ENCODE measurements at regions of chrX and their contacts with region 1.

Region 1: DNA sequence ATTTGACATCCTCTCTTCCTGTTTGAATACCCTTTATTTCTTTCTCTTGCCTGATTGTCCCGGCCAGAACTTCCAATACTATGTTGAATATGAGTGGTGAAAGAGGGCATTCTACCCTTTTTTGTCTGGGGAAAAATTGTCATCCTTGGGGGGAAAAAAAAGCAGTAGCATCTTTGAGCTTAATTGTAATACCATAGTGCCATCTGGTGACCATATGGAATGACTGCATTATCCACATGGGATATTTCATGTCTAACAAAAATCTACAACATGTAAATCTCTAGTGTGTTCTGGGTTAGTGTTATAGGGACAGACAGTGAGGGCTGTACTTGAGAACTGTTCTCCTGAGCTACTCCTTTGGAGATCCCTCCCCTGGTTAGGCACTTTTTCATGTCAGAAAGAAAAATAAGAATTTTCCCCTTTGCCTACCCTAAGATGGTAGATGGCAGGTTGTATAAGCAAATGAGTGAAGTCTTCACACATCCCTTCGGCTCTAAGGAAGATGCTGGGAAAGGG is 26.0 kb downstream of the CAPN6 start:
- DNase-seq: peak; percentile 31
- H3K4me3 Mint-ChIP-seq: no peak overlapping the region
- H3K27ac Mint-ChIP-seq: no peak overlapping the region
- H3K4me1 Mint-ChIP-seq: no peaks in the 10 kb centered on the region
- H3K27me3 Mint-ChIP-seq: peaks cover 100% of the 10 kb centered on the region
- CTCF ChIP-seq: peak; percentile 66

Region 2: DNA sequence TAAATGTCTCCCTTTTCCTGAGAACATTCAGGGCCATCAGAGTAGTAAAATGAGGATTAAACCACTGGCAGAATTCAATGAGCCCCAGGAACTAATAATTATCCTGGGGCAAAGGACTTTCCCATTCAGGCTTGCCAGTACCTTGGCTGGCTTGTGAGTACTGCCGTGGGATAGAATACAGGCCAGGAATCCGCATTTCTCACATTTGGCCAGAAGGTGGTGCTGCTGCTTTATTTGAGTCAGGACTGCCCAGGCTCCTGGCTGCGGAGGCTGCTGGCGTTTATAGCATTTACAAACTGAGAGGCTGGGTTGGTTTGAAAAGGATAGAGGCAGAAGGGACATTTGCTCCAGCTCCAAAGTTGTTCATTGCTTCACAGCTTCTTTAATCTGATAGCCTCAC is 794.2 kb before region 1 on chrX:
- CTCF ChIA-PET with region 1: interaction called, 4 read pairs
- POLR2A ChIA-PET with region 1: no interaction called
- intact Hi-C with region 1: loop called (anchors 2 kb)
- DNase-seq: peak; percentile 84
- H3K4me3 Mint-ChIP-seq: no peak overlapping the region
- H3K27ac Mint-ChIP-seq: no peak overlapping the region
- H3K4me1 Mint-ChIP-seq: no peaks in the 10 kb centered on the region
- H3K27me3 Mint-ChIP-seq: peaks cover 80% of the 10 kb centered on the region
- CTCF ChIP-seq: peak; percentile 88

Region 3: GRCh38 chrX:110992611-110993010 is 251.7 kb before region 1 on chrX:
- CTCF ChIA-PET with region 1: interaction called, 3 read pairs
- POLR2A ChIA-PET with region 1: no interaction called
- intact Hi-C with region 1: loop called (anchors 5 kb)
- DNase-seq: peak; percentile 51
- H3K4me3 Mint-ChIP-seq: no peak overlapping the region
- H3K27ac Mint-ChIP-seq: no peak overlapping the region
- H3K4me1 Mint-ChIP-seq: no peaks in the 10 kb centered on the region
- H3K27me3 Mint-ChIP-seq: peaks cover 67% of the 10 kb centered on the region
- CTCF ChIP-seq: peak; percentile 34

Region 4: GRCh38 chrX:111168314-111168713 is 76.0 kb before region 1 on chrX:
- CTCF ChIA-PET with region 1: interaction called, 7 read pairs
- POLR2A ChIA-PET with region 1: interaction called, 3 read pairs
- intact Hi-C with region 1: loop called (anchors 1 kb)
- DNase-seq: peak; percentile 24
- H3K4me3 Mint-ChIP-seq: no peak overlapping the region
- H3K27ac Mint-ChIP-seq: no peak overlapping the region
- H3K4me1 Mint-ChIP-seq: no peaks in the 10 kb centered on the region
- H3K27me3 Mint-ChIP-seq: peaks cover 81% of the 10 kb centered on the region
- CTCF ChIP-seq: peak; percentile 12

Region 5: GRCh38 chrX:111257733-111258132 is 13.4 kb after region 1 on chrX:
- CTCF ChIA-PET with region 1: interaction called, 23 read pairs
- POLR2A ChIA-PET with region 1: no interaction called
- intact Hi-C with region 1: no loop called
- DNase-seq: no peak
- H3K4me3 Mint-ChIP-seq: no peak overlapping the region
- H3K27ac Mint-ChIP-seq: no peak overlapping the region
- H3K4me1 Mint-ChIP-seq: no peaks in the 10 kb centered on the region
- H3K27me3 Mint-ChIP-seq: peaks cover 59% of the 10 kb centered on the region
- CTCF ChIP-seq: no peak

Measured in MCF 10A (cell line).